A673 (cell line): ENCODE measurements at regions of chr11 and their contacts with region 1.

Region 1: DNA sequence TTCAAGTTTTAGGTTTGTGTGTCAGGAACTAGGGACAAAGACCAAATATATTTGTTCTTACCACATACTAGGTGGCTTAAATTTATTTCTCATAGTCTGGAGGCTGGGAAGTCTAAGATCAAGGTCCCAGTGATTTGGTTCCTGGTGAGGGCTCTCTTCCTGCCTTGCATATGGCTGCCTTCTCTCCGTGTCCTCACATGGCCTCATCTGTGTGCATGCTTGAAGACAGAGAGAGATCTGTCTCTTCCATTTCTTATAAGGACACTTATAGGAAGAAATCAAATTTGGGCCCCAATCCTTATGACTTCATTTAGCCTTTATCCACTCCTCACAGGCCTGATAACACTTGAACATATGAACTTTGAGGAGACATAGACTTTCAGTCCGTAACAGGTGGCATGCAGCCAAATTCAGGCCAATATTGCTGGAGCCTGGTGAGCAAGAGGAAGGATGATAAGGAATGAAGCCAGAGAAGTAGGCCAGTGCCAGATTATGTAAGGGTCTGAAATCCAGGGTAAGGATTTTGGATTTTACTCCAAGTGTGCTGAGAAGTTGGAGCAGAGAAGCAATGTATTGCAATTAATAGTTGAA is 35.1 kb downstream of the TTC17 start:
- DNase-seq: peak; percentile 29
- H3K4me3 ChIP-seq: no peak overlapping the region
- H3K27ac ChIP-seq: no peak overlapping the region
- H3K4me1 ChIP-seq: no peaks in the 10 kb centered on the region
- H3K27me3 ChIP-seq: no peaks in the 10 kb centered on the region
- CTCF ChIP-seq: no peak

Region 2: GRCh38 chr11:43327987-43328386 is 65.9 kb before region 1 on chr11:
- CTCF ChIA-PET with region 1: no interaction called
- POLR2A ChIA-PET with region 1: no interaction called
- intact Hi-C with region 1: loop called (anchors 5 kb)
- DNase-seq: peak; percentile 83
- H3K4me3 ChIP-seq: no peak overlapping the region
- H3K27ac ChIP-seq: no peak overlapping the region
- H3K4me1 ChIP-seq: no peaks in the 10 kb centered on the region
- H3K27me3 ChIP-seq: no peaks in the 10 kb centered on the region
- CTCF ChIP-seq: no peak

Region 3: GRCh38 chr11:43447151-43447550 is 53.3 kb after region 1 on chr11:
- CTCF ChIA-PET with region 1: no interaction called
- POLR2A ChIA-PET with region 1: no interaction called
- intact Hi-C with region 1: loop called (anchors 5 kb)
- DNase-seq: no peak
- H3K4me3 ChIP-seq: no peak overlapping the region
- H3K27ac ChIP-seq: no peak overlapping the region
- H3K4me1 ChIP-seq: no peaks in the 10 kb centered on the region
- H3K27me3 ChIP-seq: no peaks in the 10 kb centered on the region
- CTCF ChIP-seq: no peak